Activated naive CD4-positive, alpha-beta T cell treated with anti-CD3 and anti-CD28 coated beads for 36 hours (primary cell): ENCODE measurements at regions of chr1 and their contacts with region 1.

Region 1: GRCh38 chr1:26787706-26788514 is at the start of gene PIGV:
- DNase-seq: peak; percentile 87
- H3K4me3 Mint-ChIP-seq: peak within 1 kb of the TSS; percentile 83
- H3K27ac Mint-ChIP-seq: peak within 1 kb of the TSS; percentile 97
- H3K4me1 Mint-ChIP-seq: peaks cover 58% of the 10 kb centered on the region
- H3K27me3 Mint-ChIP-seq: no peaks in the 10 kb centered on the region
- total RNA-seq, gene PIGV: 10.6 to 11.2 TPM

Region 2: DNA sequence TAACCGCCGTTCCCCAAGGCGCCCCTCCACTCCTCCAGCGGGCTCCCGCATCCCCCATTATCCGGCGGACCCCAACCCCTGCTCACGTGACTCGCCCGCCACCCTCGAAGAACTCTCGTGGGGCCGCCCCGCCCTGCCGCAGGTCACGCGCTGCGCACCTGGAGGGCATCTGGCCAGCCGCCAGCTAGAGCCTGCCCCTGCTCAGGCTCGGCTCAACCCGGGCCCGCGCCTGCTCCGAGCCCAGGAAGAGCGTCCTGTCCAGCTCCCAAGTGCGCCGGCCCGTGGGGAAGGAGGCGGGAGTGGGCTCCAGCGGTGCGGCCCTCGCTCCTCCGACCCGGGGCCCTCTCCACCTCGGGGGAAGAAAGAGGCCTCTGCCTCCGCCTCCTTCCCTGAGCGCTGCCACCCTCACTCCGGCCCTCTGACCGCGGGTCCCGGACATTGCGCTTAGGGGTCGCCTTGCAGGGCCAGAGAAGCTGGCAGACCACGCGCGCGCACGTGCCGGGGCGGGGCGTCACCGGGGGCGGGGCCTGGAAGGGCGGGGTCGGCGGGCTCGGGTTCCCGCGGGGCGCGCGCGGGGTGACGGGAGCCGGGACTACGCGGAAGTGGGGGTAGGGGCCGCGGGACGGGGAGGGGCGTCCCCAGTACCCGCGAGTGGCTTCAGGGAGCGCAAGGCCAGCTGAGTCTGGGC is 287.3 kb before region 1 on chr1:
- CTCF ChIA-PET with region 1: interaction called, 7 read pairs
- intact Hi-C with region 1: loop called (anchors 1 kb)
- DNase-seq: peak; percentile 93
- H3K4me3 Mint-ChIP-seq: peak overlapping the region; percentile 87
- H3K27ac Mint-ChIP-seq: peak overlapping the region; percentile 96
- H3K4me1 Mint-ChIP-seq: peaks cover 18% of the 10 kb centered on the region
- H3K27me3 Mint-ChIP-seq: no peaks in the 10 kb centered on the region

Region 3: GRCh38 chr1:26602378-26602959 is 185.4 kb before region 1 on chr1:
- CTCF ChIA-PET with region 1: interaction called, 178 read pairs
- intact Hi-C with region 1: loop called (anchors 1 kb)
- DNase-seq: peak; percentile 62
- H3K4me3 Mint-ChIP-seq: no peak overlapping the region
- H3K27ac Mint-ChIP-seq: no peak overlapping the region
- H3K4me1 Mint-ChIP-seq: peaks cover 8% of the 10 kb centered on the region
- H3K27me3 Mint-ChIP-seq: peaks cover 3% of the 10 kb centered on the region

Region 4: GRCh38 chr1:26695356-26696118 is 92.4 kb before region 1 on chr1 and contains the start of gene ARID1A:
- CTCF ChIA-PET with region 1: interaction called, 72 read pairs
- intact Hi-C with region 1: loop called (anchors 1 kb)
- DNase-seq: peak; percentile 95
- H3K4me3 Mint-ChIP-seq: peak within 1 kb of the TSS; percentile 81
- H3K27ac Mint-ChIP-seq: peak within 1 kb of the TSS; percentile 91
- H3K4me1 Mint-ChIP-seq: peaks cover 22% of the 10 kb centered on the region
- H3K27me3 Mint-ChIP-seq: no peaks in the 10 kb centered on the region
- total RNA-seq, gene ARID1A: 65.0 to 65.9 TPM

Region 5: GRCh38 chr1:26744075-26744959 is 43.6 kb before region 1 on chr1:
- CTCF ChIA-PET with region 1: interaction called, 33 read pairs
- intact Hi-C with region 1: loop called (anchors 1 kb)
- DNase-seq: peak; percentile 92
- H3K4me3 Mint-ChIP-seq: peak overlapping the region; percentile 58
- H3K27ac Mint-ChIP-seq: peak overlapping the region; percentile 94
- H3K4me1 Mint-ChIP-seq: peaks cover 88% of the 10 kb centered on the region
- H3K27me3 Mint-ChIP-seq: no peaks in the 10 kb centered on the region

Region 6: GRCh38 chr1:26811057-26811456 is 23.1 kb after region 1 on chr1:
- CTCF ChIA-PET with region 1: interaction called, 8 read pairs
- intact Hi-C with region 1: loop called (anchors 2 kb)
- DNase-seq: no peak
- H3K4me3 Mint-ChIP-seq: no peak overlapping the region
- H3K27ac Mint-ChIP-seq: no peak overlapping the region
- H3K4me1 Mint-ChIP-seq: peaks cover 14% of the 10 kb centered on the region
- H3K27me3 Mint-ChIP-seq: no peaks in the 10 kb centered on the region

Region 7: DNA sequence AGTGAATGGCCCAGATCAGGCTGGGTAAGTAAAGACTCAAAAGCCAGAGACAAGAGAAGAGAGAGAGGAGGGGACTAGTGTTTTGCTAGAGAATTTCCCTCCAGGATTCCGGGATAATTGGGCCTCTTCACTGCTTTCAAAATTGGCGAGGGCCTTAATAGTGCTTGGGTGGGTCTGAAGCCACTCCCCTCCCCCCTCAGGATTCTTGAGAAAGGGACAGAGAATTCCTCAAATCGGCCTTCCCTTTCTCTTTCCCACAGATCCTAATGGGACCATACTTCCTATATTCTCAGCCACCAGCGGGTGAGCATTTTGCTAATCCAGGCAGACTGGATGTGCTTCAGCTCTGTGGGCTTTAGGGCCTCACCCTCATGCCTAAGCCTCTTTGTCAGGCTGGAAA is 87.0 kb after region 1 on chr1:
- CTCF ChIA-PET with region 1: interaction called, 3 read pairs
- intact Hi-C with region 1: loop called (anchors 1 kb)
- DNase-seq: no peak
- H3K4me3 Mint-ChIP-seq: no peak overlapping the region
- H3K27ac Mint-ChIP-seq: no peak overlapping the region
- H3K4me1 Mint-ChIP-seq: peaks cover 2% of the 10 kb centered on the region
- H3K27me3 Mint-ChIP-seq: no peaks in the 10 kb centered on the region

Region 8: GRCh38 chr1:26887125-26887524 is 99.2 kb after region 1 on chr1:
- CTCF ChIA-PET with region 1: no interaction called
- intact Hi-C with region 1: no loop called
- DNase-seq: peak; percentile 27
- H3K4me3 Mint-ChIP-seq: no peak overlapping the region
- H3K27ac Mint-ChIP-seq: peak overlapping the region; percentile 76
- H3K4me1 Mint-ChIP-seq: peaks cover 30% of the 10 kb centered on the region
- H3K27me3 Mint-ChIP-seq: no peaks in the 10 kb centered on the region

Region 9: DNA sequence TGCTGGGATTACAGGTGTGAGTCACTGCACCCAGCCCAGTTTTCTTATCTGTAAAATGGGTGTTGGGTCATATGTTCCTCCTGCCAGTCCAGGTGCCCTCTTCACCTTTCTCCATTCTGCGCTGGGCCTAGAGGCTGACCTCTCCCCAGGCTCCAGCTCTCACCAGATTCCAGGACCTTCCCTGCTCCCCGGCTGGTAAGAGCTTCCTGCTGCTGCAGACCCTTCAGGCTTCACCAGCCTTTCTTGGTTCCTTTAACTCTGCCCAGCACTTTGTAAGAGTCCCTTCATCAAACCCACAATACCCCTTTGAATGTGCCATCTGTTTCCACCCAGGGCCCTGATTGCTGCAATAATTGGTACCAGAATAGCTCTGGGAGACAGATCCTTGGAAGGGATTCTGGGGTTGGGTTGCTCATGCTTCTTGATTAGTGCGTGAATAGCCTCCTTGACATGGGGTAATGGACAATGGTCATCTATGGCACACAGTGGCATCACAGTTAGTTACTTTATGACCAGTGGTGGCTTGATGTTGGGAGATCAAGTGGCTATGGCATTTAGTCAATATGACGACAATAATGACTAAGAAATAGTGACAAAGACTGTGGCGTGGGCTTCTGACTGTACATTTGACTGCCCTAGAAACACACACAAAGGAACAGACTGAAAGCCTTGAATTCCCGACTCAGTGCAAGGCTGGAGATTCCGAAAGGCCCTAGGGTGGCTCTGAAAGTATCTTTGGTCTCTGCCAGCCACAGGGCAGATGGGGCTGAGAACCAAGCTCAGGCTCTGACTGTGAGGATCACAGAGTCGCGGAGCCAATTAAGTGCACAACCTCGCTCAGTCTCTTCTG is 299.7 kb after region 1 on chr1:
- CTCF ChIA-PET with region 1: no interaction called
- intact Hi-C with region 1: no loop called
- DNase-seq: no peak
- H3K4me3 Mint-ChIP-seq: no peak overlapping the region
- H3K27ac Mint-ChIP-seq: no peak overlapping the region
- H3K4me1 Mint-ChIP-seq: peaks cover 5% of the 10 kb centered on the region
- H3K27me3 Mint-ChIP-seq: no peaks in the 10 kb centered on the region